Calu3 (cell line): ENCODE measurements at regions of chr19 and their contacts with region 1.

Region 1: DNA sequence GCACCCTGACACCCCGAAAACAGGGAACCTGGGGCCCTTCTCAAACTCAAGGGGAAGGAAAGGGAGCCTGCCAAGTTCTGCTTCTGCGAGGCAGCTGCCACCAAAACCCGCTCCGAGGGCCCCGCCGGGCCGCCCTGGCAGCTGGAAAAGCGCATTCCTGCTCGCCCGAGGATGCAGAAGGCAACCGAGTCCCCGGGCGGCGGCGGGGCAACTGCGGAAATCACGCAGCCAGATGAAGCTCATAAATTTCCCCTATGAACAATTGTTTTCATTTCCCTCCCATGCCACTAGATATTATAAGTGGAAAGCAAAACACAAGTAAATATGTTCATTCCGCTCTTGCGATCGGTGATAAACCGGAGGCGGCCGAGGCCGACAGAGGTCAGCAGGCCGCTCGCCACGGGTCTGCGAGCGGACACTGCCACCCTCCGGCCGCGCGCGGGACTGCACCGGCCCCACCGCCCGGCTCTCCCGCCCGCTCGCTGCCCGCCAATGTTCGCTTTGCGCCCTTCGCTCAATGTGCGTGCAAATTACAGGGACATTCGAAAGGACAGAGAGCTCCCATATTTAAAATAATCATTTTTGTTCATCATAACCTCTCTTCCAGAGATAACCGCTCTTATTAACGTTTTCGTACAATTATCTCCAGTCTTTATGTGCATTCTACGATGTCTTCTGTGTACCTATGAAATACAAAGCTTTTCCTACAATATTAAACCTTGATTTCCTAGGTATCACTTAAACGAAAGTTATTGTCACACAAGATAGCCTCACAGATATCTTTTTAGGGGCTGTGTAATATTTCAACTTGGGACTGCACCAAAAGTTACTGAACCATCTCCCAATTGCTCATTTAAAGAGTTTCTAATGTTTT is 120.8 kb upstream of the ZNF507 start:
- DNase-seq: peak; percentile 78
- H3K4me3 Mint-ChIP-seq: no peak overlapping the region
- H3K27ac Mint-ChIP-seq: no peak overlapping the region
- H3K4me1 Mint-ChIP-seq: no peaks in the 10 kb centered on the region
- H3K27me3 Mint-ChIP-seq: peaks cover 40% of the 10 kb centered on the region
- CTCF ChIP-seq: peak; percentile 99

Region 2: GRCh38 chr19:30669329-30670010 is 1555.1 kb before region 1 on chr19:
- CTCF ChIA-PET with region 1: no interaction called
- intact Hi-C with region 1: loop called (anchors 5 kb)
- DNase-seq: peak; percentile 63
- H3K4me3 Mint-ChIP-seq: no peak overlapping the region
- H3K27ac Mint-ChIP-seq: no peak overlapping the region
- H3K4me1 Mint-ChIP-seq: no peaks in the 10 kb centered on the region
- H3K27me3 Mint-ChIP-seq: peaks cover 43% of the 10 kb centered on the region
- CTCF ChIP-seq: peak; percentile 67

Region 3: GRCh38 chr19:30682999-30683536 is 1541.5 kb before region 1 on chr19:
- CTCF ChIA-PET with region 1: interaction called, 6 read pairs
- intact Hi-C with region 1: loop called (anchors 5 kb)
- DNase-seq: peak; percentile 75
- H3K4me3 Mint-ChIP-seq: no peak overlapping the region
- H3K27ac Mint-ChIP-seq: no peak overlapping the region
- H3K4me1 Mint-ChIP-seq: no peaks in the 10 kb centered on the region
- H3K27me3 Mint-ChIP-seq: peaks cover 34% of the 10 kb centered on the region
- CTCF ChIP-seq: peak; percentile 65